Activated CD8-positive, alpha-beta T cell treated with anti-CD3 and anti-CD28 coated beads, Interleukin-2, amount 10 ng/mL, durations not matched to agents 7 days and 5 days (primary cell): ENCODE measurements at regions of chr15 and their contacts with region 1.

Region 1: GRCh38 chr15:71443538-71443937 is 328.3 kb downstream of the THSD4 start:
- DNase-seq: peak; percentile 56
- ATAC-seq: no peak
- H3K4me3 Mint-ChIP-seq: no peak overlapping the region
- H3K27ac Mint-ChIP-seq: no peak overlapping the region
- H3K4me1 Mint-ChIP-seq: no peaks in the 10 kb centered on the region
- H3K27me3 Mint-ChIP-seq: peaks cover 8% of the 10 kb centered on the region

Region 2: DNA sequence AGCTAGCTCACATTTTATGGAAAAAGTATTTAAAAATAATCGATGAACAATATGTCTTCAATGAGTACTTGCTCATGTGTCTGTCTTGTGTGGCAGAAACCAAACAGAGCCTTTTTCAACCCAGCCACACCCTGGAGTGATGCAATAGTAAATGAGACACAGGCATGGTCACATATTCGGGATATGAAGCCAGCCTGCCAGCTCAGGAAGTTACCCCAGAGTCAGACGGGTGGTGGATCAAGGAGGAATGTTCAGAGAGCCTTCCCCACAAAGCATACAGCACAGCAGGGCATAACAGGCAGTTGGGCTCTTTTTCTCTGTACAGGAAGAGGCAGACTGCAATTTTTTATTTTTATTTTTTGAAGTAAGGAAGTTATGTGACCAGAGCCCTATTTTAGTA is 616.9 kb before region 1 on chr15:
- CTCF ChIA-PET with region 1: interaction called, 11 read pairs
- POLR2A ChIA-PET with region 1: no interaction called
- DNase-seq: no peak
- ATAC-seq: no peak
- H3K4me3 Mint-ChIP-seq: no peak overlapping the region
- H3K27ac Mint-ChIP-seq: no peak overlapping the region
- H3K4me1 Mint-ChIP-seq: peaks cover 3% of the 10 kb centered on the region
- H3K27me3 Mint-ChIP-seq: peaks cover 6% of the 10 kb centered on the region

Region 3: DNA sequence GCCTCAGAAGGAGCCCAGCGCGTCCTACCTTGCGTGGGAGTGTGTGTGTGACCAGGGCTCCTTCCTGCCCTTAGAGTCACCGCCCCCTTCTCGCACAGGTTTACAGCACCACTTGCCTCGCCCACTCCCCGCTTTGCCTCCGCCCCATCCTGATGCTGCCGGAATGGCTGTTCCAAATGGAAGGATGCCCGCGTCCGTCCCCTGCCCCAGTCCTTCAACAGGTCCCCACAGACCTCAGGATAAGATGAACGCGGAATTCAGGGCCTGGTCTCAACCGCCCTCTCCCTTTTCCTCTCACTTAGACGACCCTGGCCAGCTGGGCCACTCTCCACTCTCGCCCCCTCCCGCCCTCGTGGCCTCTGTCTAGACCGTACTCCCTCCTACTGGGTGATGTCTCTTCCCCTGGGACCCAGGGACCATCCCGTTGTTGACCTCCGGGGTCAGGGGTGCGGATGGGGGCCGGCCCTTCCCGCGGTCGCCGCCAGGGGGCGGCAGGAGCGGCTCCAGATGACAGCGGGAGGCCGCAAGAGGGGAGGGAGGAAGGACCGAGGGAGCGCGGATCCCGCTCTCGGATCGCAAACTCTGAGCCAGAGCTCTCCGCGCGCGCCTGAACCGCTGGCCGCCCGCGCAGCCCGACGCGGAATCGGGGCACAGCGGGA is 328.5 kb before region 1 on chr15 and contains the start of gene THSD4:
- CTCF ChIA-PET with region 1: interaction called, 10 read pairs
- POLR2A ChIA-PET with region 1: no interaction called
- DNase-seq: peak; percentile 70
- ATAC-seq: peak; percentile 82
- H3K4me3 Mint-ChIP-seq: peak within 1 kb of the TSS; percentile 47
- H3K27ac Mint-ChIP-seq: no peak within 1 kb of the TSS
- H3K4me1 Mint-ChIP-seq: peaks cover 9% of the 10 kb centered on the region
- H3K27me3 Mint-ChIP-seq: peaks cover 31% of the 10 kb centered on the region
- total RNA-seq, gene THSD4: not detected

Region 4: GRCh38 chr15:71386448-71387236 is 56.9 kb before region 1 on chr15:
- CTCF ChIA-PET with region 1: interaction called, 22 read pairs
- POLR2A ChIA-PET with region 1: no interaction called
- DNase-seq: no peak
- ATAC-seq: no peak
- H3K4me3 Mint-ChIP-seq: no peak overlapping the region
- H3K27ac Mint-ChIP-seq: no peak overlapping the region
- H3K4me1 Mint-ChIP-seq: no peaks in the 10 kb centered on the region
- H3K27me3 Mint-ChIP-seq: peaks cover 33% of the 10 kb centered on the region